IMR-90 (cell line): ENCODE measurements at regions of chr14 and their contacts with region 1.

Region 1: DNA sequence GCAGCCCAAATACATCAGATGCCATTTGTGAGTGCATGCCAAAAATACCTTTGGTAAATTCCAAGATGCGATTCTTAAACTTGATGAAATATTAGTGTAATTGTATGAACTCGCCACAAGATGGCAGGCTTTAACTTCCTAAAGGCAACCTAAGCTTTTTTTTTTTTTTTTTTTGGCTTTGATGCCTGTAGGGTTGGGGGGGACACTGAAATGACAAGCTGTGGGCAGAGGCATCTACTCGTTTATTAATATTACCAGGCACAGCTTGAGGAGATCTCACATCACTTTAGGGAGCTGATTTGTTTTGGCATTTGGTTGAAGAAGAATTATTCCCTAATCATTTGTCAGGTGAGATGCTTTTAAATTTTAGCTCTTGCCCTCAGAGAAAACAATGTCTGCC is 126.7 kb upstream of the CCDC196 start:
- DNase-seq: peak; percentile 64
- ATAC-seq: peak; percentile 40; the same call in 1 of the 2 replicates
- H3K4me3 ChIP-seq: no peak overlapping the region
- H3K27ac ChIP-seq: no peak overlapping the region
- H3K4me1 ChIP-seq: no peaks in the 10 kb centered on the region
- H3K27me3 ChIP-seq: no peaks in the 10 kb centered on the region
- CTCF ChIP-seq: peak; percentile 67
- POLR2A ChIP-seq: no peak
- RAD21 ChIP-seq: peak; percentile 62

Region 2: DNA sequence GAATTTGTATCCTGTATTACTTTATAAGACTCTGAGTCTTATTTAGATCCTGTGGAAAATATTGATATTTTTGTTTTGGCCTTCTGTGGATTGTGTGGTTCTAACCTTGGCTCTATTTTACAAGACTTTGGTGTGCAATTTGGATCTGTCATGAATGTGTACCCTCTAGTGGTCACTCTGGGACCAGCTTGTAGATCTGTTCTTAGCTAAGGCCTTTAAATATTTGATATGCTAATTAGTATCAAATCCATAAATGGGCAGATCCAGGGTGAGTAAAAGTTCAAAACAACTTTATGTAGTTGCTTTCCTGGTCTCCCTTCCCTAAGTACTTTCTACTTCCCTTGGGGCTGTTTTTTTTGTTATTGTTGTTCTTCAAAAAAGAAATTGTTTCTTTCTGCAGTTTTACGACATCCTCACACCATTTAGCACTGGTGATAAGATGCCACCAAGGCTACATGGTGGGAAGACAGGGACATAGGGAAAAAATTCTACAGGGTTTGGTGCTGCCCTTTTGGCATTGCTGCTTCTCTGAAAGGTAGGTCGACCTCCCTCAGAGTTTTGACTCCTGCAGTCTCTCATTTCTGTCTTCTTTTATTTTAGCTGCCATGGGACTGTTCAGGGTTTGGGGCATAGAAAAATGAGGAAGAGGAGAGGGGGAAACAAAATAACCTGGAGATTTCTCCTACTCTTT is 387.0 kb after region 1 on chr14:
- CTCF ChIA-PET with region 1: no interaction called
- POLR2A ChIA-PET with region 1: no interaction called
- dilution Hi-C with region 1: no loop called
- in situ Hi-C with region 1: no loop called
- intact Hi-C with region 1: loop called (anchors 10 kb)
- DNase-seq: peak; percentile 58
- ATAC-seq: peak; percentile 63
- H3K4me3 ChIP-seq: no peak overlapping the region
- H3K27ac ChIP-seq: no peak overlapping the region
- H3K4me1 ChIP-seq: no peaks in the 10 kb centered on the region
- H3K27me3 ChIP-seq: no peaks in the 10 kb centered on the region
- CTCF ChIP-seq: peak; percentile 52
- POLR2A ChIP-seq: no peak
- RAD21 ChIP-seq: peak; percentile 40

Region 3: DNA sequence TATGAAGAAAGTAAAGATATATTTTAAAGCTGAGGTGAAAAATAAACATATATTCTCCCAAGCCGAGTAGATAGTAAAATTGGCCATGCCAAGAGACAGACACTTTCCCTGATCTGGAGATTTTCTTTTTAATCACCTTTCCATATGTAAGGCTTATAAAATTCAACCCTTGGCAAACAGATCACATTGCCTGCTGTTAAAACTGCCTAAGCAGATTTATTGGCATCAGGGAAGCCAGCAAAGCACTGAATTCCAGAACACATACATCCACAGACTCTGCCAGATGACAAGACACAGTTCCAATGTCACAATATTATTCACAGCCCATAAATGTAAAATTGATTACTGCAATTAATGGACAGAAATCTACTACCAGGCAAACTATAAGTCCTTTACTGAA is 751.5 kb after region 1 on chr14:
- CTCF ChIA-PET with region 1: no interaction called
- POLR2A ChIA-PET with region 1: no interaction called
- dilution Hi-C with region 1: no loop called
- in situ Hi-C with region 1: loop called (anchors 25 kb)
- intact Hi-C with region 1: loop called (anchors 5 kb)
- DNase-seq: no peak
- ATAC-seq: no peak
- H3K4me3 ChIP-seq: no peak overlapping the region
- H3K27ac ChIP-seq: no peak overlapping the region
- H3K4me1 ChIP-seq: no peaks in the 10 kb centered on the region
- H3K27me3 ChIP-seq: no peaks in the 10 kb centered on the region
- CTCF ChIP-seq: no peak
- POLR2A ChIP-seq: no peak
- RAD21 ChIP-seq: no peak

Region 4: GRCh38 chr14:67137744-67138371 is 778.4 kb after region 1 on chr14:
- CTCF ChIA-PET with region 1: no interaction called
- POLR2A ChIA-PET with region 1: no interaction called
- dilution Hi-C with region 1: no loop called
- in situ Hi-C with region 1: no loop called
- intact Hi-C with region 1: loop called (anchors 5 kb)
- DNase-seq: peak; percentile 22
- ATAC-seq: no peak
- H3K4me3 ChIP-seq: no peak overlapping the region
- H3K27ac ChIP-seq: no peak overlapping the region
- H3K4me1 ChIP-seq: no peaks in the 10 kb centered on the region
- H3K27me3 ChIP-seq: no peaks in the 10 kb centered on the region
- CTCF ChIP-seq: peak; percentile 57
- POLR2A ChIP-seq: no peak
- RAD21 ChIP-seq: peak; percentile 54

Region 5: DNA sequence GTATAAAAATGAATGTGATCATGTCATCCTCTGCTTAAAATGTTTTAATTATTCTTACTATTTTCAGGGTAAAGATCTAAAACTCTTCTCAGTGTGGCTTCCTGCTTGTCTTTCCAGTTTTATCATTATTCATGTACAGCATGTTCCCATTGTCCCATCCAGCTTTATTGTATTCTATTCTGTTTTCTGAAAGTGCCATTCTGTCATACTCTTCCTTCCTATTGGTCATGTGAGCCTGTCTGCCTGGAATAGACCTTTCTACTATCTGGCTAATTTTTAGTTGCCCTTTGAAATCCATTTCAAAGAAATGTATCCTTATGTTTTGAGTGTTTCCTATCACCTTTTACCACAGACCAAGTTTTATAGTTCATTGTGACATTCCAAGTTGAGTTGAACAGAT is 916.6 kb after region 1 on chr14:
- CTCF ChIA-PET with region 1: no interaction called
- POLR2A ChIA-PET with region 1: no interaction called
- dilution Hi-C with region 1: no loop called
- in situ Hi-C with region 1: no loop called
- intact Hi-C with region 1: loop called (anchors 5 kb)
- DNase-seq: no peak
- ATAC-seq: no peak
- H3K4me3 ChIP-seq: no peak overlapping the region
- H3K27ac ChIP-seq: no peak overlapping the region
- H3K4me1 ChIP-seq: no peaks in the 10 kb centered on the region
- H3K27me3 ChIP-seq: no peaks in the 10 kb centered on the region
- CTCF ChIP-seq: no peak
- POLR2A ChIP-seq: no peak
- RAD21 ChIP-seq: no peak